Transverse colon (tissue), 4 donors: ENCODE measurements at regions of chr13 and their contacts with region 1.

Region 1: DNA sequence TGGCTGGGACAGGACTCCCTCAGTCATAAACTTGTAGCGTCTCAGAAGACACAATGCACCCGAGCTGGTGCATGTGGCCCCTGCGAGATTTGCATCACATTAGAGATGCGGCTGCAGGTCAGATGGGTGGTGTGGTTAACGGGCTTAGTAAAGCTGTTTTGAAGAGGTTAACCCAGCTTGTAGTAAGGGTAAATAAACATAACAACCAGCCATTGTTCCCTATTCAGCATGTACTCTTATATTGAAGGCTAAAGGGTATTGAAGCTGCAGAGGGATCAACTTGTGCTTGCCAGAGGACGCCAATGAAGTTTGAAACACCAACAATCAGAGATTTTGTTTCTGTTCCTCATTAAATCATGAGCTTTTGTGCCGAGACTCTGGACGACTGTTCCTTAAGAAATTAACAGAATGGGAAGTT is 79.4 kb downstream of the ZIC5 start:
- DNase-seq: no peak
- H3K4me3 ChIP-seq: no peak overlapping the region
- H3K27ac ChIP-seq: no peak overlapping the region
- H3K4me1 ChIP-seq: peaks cover 0 to 18% (median 12%) of the 10 kb centered on the region in 4 donors
- H3K27me3 ChIP-seq: peaks cover 32% of the 10 kb centered on the region
- CTCF ChIP-seq: no peak
- EP300 ChIP-seq: no peak
- POLR2A ChIP-seq: no peak

Region 2: DNA sequence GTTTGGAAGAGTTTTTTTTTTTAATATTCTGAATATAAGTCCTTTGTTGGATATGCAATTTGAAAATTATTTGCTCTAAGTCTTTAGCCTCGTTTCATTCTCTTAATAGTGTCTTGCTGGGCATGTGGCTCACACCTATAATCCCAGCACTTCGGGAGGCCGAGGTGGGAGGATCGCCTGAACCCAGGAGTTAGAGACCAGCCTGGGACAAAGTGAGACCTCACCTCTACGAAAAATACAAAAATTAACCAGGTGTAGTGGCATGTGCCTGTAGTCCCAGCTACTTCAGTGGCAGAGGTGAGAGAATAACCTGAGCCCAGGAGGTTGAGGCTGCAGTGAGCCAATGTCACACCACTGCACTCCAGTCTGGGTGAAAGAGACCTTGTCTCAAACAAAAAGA is 778.9 kb before region 1 on chr13:
- in situ Hi-C with region 1: no loop called
- intact Hi-C with region 1: no loop called
- DNase-seq: no peak
- H3K4me3 ChIP-seq: no peak overlapping the region
- H3K27ac ChIP-seq: no peak overlapping the region
- H3K4me1 ChIP-seq: no peaks in the 10 kb centered on the region
- H3K27me3 ChIP-seq: peaks cover 4% of the 10 kb centered on the region
- CTCF ChIP-seq: no peak
- EP300 ChIP-seq: no peak
- POLR2A ChIP-seq: no peak

Region 3: DNA sequence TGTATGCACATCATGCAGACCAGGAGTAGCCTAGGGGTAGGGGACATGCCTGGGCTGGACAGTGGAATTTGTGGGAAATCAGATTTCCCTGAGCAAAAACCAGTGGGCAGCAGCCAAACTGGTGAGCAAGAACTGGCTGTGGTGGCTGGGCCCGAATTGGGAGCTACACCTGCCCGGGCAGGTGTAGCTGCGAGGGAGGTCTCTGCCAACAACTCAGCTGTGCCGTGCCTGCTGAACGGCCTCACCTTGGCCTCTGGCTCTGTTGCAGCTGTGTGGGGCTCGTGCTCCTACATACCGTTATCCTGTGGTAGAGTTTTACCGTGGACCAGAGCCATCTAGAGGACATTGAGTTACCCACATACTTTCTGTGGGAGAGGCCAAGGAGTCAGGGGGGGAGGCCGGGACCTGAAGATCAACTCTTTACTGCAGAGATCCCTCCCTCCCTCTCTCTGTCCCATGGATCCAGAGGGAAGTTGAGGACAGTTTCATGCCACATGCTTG is 277.8 kb before region 1 on chr13:
- in situ Hi-C with region 1: no loop called
- intact Hi-C with region 1: loop called (anchors 1 kb)
- DNase-seq: peak; percentile 25
- H3K4me3 ChIP-seq: no peak overlapping the region
- H3K27ac ChIP-seq: no peak overlapping the region
- H3K4me1 ChIP-seq: peaks cover 0 to 31% (median 13%) of the 10 kb centered on the region in 4 donors
- H3K27me3 ChIP-seq: no peaks in the 10 kb centered on the region
- CTCF ChIP-seq: no peak
- EP300 ChIP-seq: no peak
- POLR2A ChIP-seq: no peak

Region 4: GRCh38 chr13:99935777-99936176 is 43.6 kb after region 1 on chr13:
- in situ Hi-C with region 1: no loop called
- intact Hi-C with region 1: loop called (anchors 2 kb)
- DNase-seq: no peak
- H3K4me3 ChIP-seq: no peak overlapping the region
- H3K27ac ChIP-seq: no peak overlapping the region
- H3K4me1 ChIP-seq: peaks cover 0 to 2% (median 0%) of the 10 kb centered on the region in 4 donors
- H3K27me3 ChIP-seq: peaks cover 22% of the 10 kb centered on the region
- CTCF ChIP-seq: no peak
- EP300 ChIP-seq: no peak
- POLR2A ChIP-seq: no peak